GM12878 (cell line): ENCODE measurements at regions of chrX and their contacts with region 1.

Region 1: DNA sequence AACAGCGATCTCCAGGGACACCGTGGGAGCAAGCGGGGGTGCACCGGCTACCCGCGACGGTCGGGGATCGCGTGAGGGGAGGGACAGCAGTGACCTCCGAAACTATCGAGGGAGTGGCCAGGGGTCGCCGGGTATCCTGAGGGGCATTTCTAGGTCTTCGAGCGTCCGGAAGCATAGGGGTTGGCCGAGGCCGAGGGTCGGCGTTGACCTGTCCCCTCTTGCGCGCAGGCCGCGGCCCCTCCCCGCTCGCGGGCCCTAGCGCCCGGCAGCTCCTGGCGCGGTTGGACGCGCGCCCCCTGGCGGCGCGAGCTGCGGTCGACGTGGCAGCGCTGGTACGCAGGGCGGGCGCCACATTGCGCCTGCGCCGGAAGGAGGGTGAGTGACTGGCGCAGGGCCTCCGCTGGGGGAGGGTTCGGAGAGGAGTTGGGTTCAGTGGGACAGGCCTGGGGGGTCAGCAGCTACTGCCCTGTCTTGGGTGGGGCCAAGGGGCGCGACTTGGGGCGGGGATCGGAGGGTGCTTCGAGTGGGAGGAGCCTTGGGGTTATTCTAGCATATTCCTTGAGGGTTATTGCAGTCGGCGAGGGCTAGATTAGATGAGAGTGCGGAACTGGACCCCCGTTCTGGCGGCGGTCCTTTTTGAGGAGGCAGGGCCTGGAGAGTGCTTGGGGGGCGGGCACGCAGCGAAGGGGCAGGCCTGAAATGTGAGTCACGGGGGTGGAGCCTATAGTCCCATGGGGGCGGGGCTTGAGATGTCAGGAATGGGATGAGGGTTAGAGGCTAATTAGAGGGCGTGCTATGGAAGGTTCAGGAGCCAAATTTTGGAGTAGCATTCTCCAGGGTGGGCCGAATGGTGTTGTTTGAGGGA is 1.2 kb downstream of the MAGIX start:
- DNase-seq: peak; percentile 42
- ATAC-seq: peak; percentile 69
- H3K4me3 ChIP-seq: no peak overlapping the region; the same call in 1 of the 2 replicates
- H3K27ac ChIP-seq: peak overlapping the region; percentile 69
- H3K4me1 ChIP-seq: no peaks in the 10 kb centered on the region; the same call in none of the 2 replicates
- H3K27me3 ChIP-seq: no peaks in the 10 kb centered on the region
- CTCF ChIP-seq: peak; percentile 56 to 72 (median 64); a peak in 5 of 6 replicates
- EP300 ChIP-seq: no peak
- POLR2A ChIP-seq: peak; percentile 53
- RAD21 ChIP-seq: peak; percentile 46

Region 2: DNA sequence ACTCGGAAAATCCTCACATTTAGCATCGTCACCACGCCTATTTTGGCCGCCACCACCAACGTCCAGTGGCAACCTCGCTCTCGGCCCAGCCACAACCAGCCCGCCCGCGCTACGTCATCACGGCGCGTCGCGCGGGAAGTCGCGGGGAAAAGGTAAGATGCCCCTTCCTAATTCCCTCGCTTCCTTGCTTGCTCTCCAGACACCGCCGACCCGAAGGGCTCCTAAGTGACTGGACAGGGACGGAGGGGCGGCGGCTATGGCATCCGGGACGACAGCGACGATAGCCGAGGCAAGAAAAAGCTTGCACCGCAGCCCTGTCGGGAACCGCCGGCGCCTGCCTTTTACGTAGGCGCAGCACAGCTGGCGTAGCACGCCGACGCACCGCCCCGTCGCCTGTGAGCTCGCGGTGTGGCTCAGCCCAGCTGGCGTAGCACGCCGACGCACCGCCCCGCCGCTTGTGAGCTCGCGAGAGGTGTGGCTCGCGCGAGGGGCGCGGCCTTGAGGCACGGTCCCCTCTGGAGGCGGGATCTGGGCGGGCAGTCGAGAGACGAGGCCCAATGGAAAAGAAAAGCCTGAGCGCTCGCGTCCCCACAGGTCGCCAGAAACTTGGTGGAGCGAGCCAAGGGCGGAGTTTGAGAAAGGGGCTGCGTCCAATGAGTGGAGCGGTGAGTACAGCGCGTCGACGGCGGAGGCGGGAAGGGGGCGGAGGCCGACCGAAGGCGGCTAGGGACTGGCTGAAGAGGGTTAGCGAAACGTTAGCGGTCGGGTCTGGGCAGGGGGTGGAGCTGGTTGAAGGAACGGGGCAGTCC is 362.3 kb before region 1 on chrX and contains the start of gene HDAC6:
- CTCF ChIA-PET with region 1: no interaction called
- POLR2A ChIA-PET with region 1: no interaction called
- RAD21 ChIA-PET with region 1: no interaction called
- SMC1A ChIA-PET with region 1: no interaction called
- in situ Hi-C with region 1: no loop called
- intact Hi-C with region 1: no loop called
- DNase-seq: peak; percentile 94
- ATAC-seq: peak; percentile 90
- H3K4me3 ChIP-seq: peak within 1 kb of the TSS; percentile 69
- H3K27ac ChIP-seq: peak within 1 kb of the TSS; percentile 94
- H3K4me1 ChIP-seq: no peaks in the 10 kb centered on the region
- H3K27me3 ChIP-seq: no peaks in the 10 kb centered on the region
- CTCF ChIP-seq: no peak
- EP300 ChIP-seq: no peak
- POLR2A ChIP-seq: peak; percentile 75
- RAD21 ChIP-seq: no peak
- polyA plus RNA-seq, gene HDAC6: 8.3 to 17.5 TPM

Region 3: DNA sequence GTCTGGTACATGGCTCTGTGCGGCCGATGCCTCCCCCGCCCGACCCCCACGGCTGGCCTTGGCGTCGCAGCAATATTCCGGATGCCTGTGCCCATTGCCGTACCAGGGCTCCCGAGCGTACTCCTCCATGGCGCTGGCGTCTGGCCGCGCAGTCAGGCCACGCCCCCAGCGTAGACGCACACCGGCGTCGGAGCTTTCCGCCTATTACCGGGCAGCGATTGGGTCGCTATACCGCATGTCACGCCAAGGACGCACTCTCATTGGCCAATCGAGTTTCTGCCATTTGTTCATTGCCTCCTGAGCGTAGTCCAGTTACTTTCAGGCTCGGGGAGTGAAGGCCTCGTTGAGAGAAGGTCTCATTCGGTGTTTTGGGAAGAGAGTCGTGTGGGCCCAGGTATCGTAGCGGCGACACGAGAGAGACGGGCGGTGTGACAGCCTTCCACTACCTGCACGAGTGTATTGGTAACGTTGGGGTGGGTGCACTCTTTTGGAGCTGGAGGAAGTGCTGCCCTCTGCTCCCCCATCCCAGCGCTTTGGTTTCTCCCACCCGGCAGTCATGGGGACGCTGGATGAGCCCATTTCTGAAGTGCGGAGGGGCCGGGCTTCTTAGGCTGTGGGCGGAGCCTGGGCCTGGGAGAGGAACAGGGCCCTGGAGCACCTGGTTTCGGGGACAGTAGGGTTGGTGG is 266.0 kb before region 1 on chrX and contains the starts of genes PQBP1 and TIMM17B:
- CTCF ChIA-PET with region 1: no interaction called
- POLR2A ChIA-PET with region 1: no interaction called
- RAD21 ChIA-PET with region 1: no interaction called
- SMC1A ChIA-PET with region 1: no interaction called
- in situ Hi-C with region 1: no loop called
- intact Hi-C with region 1: no loop called
- DNase-seq: peak; percentile 92
- ATAC-seq: peak; percentile 94
- H3K4me3 ChIP-seq: peak within 1 kb of the TSS; percentile 77
- H3K27ac ChIP-seq: peak within 1 kb of the TSS; percentile 93
- H3K4me1 ChIP-seq: no peaks in the 10 kb centered on the region
- H3K27me3 ChIP-seq: no peaks in the 10 kb centered on the region
- CTCF ChIP-seq: no peak
- EP300 ChIP-seq: no peak
- POLR2A ChIP-seq: peak; percentile 86
- RAD21 ChIP-seq: no peak
- polyA plus RNA-seq, gene PQBP1: 12.5 to 28.0 TPM
- polyA plus RNA-seq, gene TIMM17B: 4.5 to 18.3 TPM

Region 4: DNA sequence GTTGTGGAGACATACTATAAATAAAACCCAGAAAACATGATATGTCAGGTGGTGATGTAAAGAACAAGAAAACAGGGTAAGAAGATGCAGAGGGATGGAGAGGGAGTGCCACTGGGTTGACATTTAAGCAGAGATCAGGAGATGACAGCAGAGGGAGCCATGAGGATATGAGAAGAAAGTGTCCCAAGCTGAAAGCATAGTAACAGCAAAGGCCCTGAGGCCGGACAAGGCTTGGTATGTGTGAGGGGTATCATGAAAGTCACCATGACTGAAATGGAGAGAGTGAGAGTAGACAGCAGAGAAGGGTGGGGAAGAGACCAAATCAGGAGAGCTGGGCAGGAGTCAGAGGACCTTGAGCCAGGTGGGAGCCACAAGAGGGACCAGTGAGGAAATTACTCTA is 43.7 kb before region 1 on chrX:
- CTCF ChIA-PET with region 1: no interaction called
- POLR2A ChIA-PET with region 1: no interaction called
- RAD21 ChIA-PET with region 1: interaction called, 4 read pairs
- SMC1A ChIA-PET with region 1: interaction called, 3 read pairs
- in situ Hi-C with region 1: no loop called
- intact Hi-C with region 1: loop called (anchors 1 kb)
- DNase-seq: no peak
- ATAC-seq: no peak
- H3K4me3 ChIP-seq: no peak overlapping the region
- H3K27ac ChIP-seq: no peak overlapping the region
- H3K4me1 ChIP-seq: no peaks in the 10 kb centered on the region
- H3K27me3 ChIP-seq: no peaks in the 10 kb centered on the region
- CTCF ChIP-seq: peak in 2 of 3 experiments; percentile 8 to 31; a peak in 2 of 6 replicates
- EP300 ChIP-seq: no peak
- POLR2A ChIP-seq: no peak
- RAD21 ChIP-seq: 0 out of 2 replicates have a peak, but pooled peaks have one; percentile 5

Region 5: GRCh38 chrX:49137492-49137891 is 26.3 kb before region 1 on chrX:
- CTCF ChIA-PET with region 1: interaction called, 19 read pairs
- POLR2A ChIA-PET with region 1: interaction called, 5 read pairs
- RAD21 ChIA-PET with region 1: no interaction called
- SMC1A ChIA-PET with region 1: interaction called, 7 read pairs
- in situ Hi-C with region 1: no loop called
- intact Hi-C with region 1: no loop called
- DNase-seq: no peak
- ATAC-seq: no peak
- H3K4me3 ChIP-seq: no peak overlapping the region
- H3K27ac ChIP-seq: no peak overlapping the region
- H3K4me1 ChIP-seq: no peaks in the 10 kb centered on the region
- H3K27me3 ChIP-seq: no peaks in the 10 kb centered on the region
- CTCF ChIP-seq: no peak
- EP300 ChIP-seq: no peak
- POLR2A ChIP-seq: no peak
- RAD21 ChIP-seq: no peak

Region 6: DNA sequence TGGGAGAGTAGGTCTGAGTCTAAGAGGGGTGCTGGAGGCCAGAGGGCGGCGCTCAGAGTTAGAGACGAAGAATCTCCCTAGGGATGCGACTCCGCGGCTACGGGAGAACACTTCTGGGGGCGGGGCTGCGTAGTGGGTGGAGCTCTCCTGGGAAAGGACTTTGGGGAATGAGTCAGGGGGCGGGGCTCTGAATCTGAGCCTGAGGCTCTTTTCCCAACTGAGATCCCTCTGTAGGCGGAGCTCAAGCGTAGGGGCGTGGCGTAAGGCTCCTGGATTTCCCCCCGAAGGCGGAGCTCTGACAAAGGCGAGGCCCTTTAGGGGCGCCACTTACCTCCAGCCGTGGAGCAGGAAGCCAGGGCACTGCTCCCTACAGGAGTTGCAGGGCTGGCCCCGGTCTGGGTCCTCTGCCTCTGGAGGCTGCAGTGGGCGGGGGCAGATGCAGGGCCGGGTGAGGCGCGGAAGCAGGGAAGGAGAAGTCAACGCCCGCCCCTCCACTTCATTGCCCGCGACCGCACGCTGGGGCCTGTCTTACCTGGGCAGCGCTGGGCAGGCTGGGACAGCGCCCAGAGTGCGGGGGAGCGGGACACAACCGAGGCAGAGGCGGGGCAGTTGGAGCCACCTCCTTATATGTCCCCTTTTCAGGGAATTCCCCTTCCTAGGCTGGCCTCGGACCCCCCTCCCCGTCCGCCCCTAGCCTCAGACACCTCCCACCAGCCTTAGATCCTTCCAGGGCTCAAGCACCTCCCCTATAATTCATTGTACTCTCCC is 20.7 kb after region 1 on chrX:
- CTCF ChIA-PET with region 1: interaction called, 57 read pairs
- POLR2A ChIA-PET with region 1: interaction called, 28 read pairs
- RAD21 ChIA-PET with region 1: interaction called, 26 read pairs
- SMC1A ChIA-PET with region 1: interaction called, 14 read pairs
- in situ Hi-C with region 1: no loop called
- intact Hi-C with region 1: no loop called
- DNase-seq: no peak
- ATAC-seq: peak; percentile 78
- H3K4me3 ChIP-seq: peak overlapping the region; percentile 80
- H3K27ac ChIP-seq: peak overlapping the region; percentile 55
- H3K4me1 ChIP-seq: peaks cover under 1% of the 10 kb centered on the region; the same call in 1 of the 2 replicates
- H3K27me3 ChIP-seq: no peaks in the 10 kb centered on the region
- CTCF ChIP-seq: no peak
- EP300 ChIP-seq: no peak
- POLR2A ChIP-seq: peak; percentile 50; the same call in 1 of the 2 replicates
- RAD21 ChIP-seq: no peak